Posterior cingulate gyrus (tissue), 11 donors: ENCODE measurements at regions of chr6 and their contacts with region 1.

Region 1: GRCh38 chr6:110528101-110528929 is 51.9 kb upstream of the SLC22A16 start:
- DNase-seq: peak in 4 of 10 donors; percentile 37 to 79 (median 53)

Region 2: GRCh38 chr6:110682460-110682853 is 154.1 kb after region 1 on chr6:
- intact Hi-C with region 1: loop called (anchors 5 kb)
- DNase-seq: peak in 3 of 10 donors; percentile 21 to 62 (median 33)

Region 3: DNA sequence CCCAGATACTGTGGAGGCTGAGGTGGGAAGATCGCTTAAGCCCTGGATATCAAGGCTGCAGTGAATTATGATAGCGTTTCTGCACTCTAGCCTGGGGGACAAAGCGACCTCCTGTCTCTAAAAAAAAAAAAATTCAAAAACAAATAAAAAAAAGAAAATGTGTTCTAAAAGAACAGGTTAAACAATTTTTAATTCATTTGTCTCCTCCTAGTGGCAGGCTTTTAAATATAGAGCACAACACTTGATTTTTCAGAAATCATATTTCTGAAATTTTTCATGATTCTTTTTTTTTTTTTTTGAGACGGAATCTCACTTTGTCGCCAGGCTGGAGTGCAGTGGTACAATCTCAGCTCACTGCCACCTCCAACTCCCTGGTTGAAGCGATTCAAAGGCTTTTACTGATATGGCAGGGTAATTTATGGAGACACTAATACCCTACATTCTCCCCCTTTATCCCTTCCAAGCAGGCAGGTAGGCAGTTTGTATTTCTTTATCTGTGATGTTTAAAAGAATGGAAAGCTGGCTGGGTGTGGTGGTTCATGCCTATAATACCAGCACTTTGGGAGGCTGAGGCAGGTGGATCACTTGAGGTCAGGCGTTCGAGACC is 421.5 kb after region 1 on chr6:
- intact Hi-C with region 1: loop called (anchors 1 kb)
- DNase-seq: no peak

Region 4: GRCh38 chr6:110999634-111000270 is 471.4 kb after region 1 on chr6:
- intact Hi-C with region 1: loop called (anchors 1 kb)
- DNase-seq: no peak